GM10248 (cell line): ENCODE measurements at regions of chr5 and their contacts with region 1.

Region 1: DNA sequence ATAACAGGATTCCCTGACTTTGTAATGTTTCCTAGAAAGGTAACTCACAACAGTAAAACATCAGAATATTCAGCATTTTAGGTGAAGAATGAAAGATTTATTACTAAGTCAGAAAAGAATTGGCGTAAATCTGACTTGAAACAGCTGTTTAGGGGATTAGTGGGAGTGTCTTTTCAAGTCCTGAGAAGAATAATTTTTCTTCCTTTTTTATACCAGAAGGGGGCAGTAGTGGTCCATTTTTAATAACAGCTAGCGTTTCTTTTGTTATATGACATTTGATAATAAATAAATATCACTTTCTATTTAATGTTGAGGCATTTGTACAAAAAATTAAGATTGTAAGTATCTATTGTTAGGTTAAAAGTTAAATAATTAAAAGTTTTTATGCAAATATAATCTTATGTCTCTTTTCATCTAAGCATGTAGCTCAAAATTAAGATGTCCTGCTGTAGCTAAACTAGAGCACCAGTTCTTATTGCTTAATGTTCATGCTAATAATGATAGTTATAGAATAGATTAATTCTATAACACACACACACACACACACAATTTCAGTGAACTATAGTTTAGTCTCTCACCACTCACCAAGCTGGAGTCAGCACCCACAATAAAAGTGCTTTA is 258.7 kb upstream of the ARRDC3 start:
- DNase-seq: no peak
- CTCF ChIP-seq: peak; percentile 33

Region 2: DNA sequence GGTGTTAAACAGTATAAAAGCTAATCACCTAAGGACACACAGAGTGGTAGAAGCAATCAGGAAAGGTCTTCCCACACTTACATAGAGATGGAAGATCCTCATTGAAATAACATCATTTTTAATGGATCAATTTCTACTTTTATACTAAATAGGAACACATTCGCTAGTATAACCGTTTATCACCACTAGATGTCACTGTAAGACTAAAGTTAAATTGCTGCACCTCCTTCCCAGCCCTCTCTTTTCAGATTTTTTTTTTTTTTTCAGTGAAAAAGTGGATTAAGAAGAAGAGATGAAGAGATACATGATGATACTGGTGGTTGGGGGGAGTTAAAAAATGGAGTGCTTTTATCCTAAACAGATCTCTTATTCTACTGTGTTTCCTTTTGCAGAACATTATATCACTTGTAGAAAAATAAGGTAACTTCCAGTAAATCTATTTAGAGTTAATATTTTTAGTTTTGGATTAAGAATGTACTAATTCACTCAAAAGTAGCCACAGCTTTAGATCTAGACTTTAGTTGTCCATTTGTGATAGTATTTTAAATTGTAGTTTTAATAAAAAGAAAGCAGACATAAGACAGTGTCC is 141.8 kb before region 1 on chr5:
- CTCF ChIA-PET with region 1: interaction called, 10 read pairs
- POLR2A ChIA-PET with region 1: no interaction called
- DNase-seq: peak; percentile 20
- CTCF ChIP-seq: peak; percentile 37